Activated CD4-positive, alpha-beta memory T cell treated with anti-CD3 and anti-CD28 coated beads, Interleukin-2, amount 10 ng/mL, durations not matched to agents 7 days and 5 days (primary cell): ENCODE measurements at regions of chr9 and their contacts with region 1.

Region 1: GRCh38 chr9:128191406-128192046 is at the start of gene CIZ1:
- DNase-seq: peak; percentile 79
- H3K4me3 Mint-ChIP-seq: peak within 1 kb of the TSS; percentile 92
- H3K27ac Mint-ChIP-seq: peak within 1 kb of the TSS; percentile 78
- H3K4me1 Mint-ChIP-seq: peaks cover 45% of the 10 kb centered on the region
- H3K27me3 Mint-ChIP-seq: no peaks in the 10 kb centered on the region
- total RNA-seq, gene CIZ1: 112 to 116 TPM

Region 2: GRCh38 chr9:128159784-128160602 is 31.5 kb before region 1 on chr9 and contains the start of gene BBLN:
- CTCF ChIA-PET with region 1: interaction called, 3 read pairs
- POLR2A ChIA-PET with region 1: interaction called, 20 read pairs
- DNase-seq: peak; percentile 95
- H3K4me3 Mint-ChIP-seq: peak within 1 kb of the TSS; percentile 78
- H3K27ac Mint-ChIP-seq: peak within 1 kb of the TSS; percentile 80
- H3K4me1 Mint-ChIP-seq: peaks cover 23% of the 10 kb centered on the region
- H3K27me3 Mint-ChIP-seq: no peaks in the 10 kb centered on the region
- total RNA-seq, gene BBLN: 91.3 to 94.1 TPM

Region 3: GRCh38 chr9:128262687-128263086 is 71.2 kb after region 1 on chr9:
- CTCF ChIA-PET with region 1: no interaction called
- POLR2A ChIA-PET with region 1: no interaction called
- DNase-seq: no peak
- H3K4me3 Mint-ChIP-seq: no peak overlapping the region
- H3K27ac Mint-ChIP-seq: no peak overlapping the region
- H3K4me1 Mint-ChIP-seq: no peaks in the 10 kb centered on the region
- H3K27me3 Mint-ChIP-seq: no peaks in the 10 kb centered on the region